HCT116 (cell line): ENCODE measurements at regions of chr5 and their contacts with region 1.

Region 1: GRCh38 chr5:138178516-138179276 is at the starts of genes BRD8 and KIF20A:
- DNase-seq: peak; percentile 94
- ATAC-seq: peak; percentile 86
- H3K4me3 ChIP-seq: peak within 1 kb of the TSS; percentile 88 to 99
- H3K27ac ChIP-seq: peak within 1 kb of the TSS; percentile 82
- H3K4me1 ChIP-seq: peaks cover 0 to 10% of the 10 kb centered on the region in 2 experiments; a peak in 1 of 4 replicates
- H3K27me3 ChIP-seq: no peaks in the 10 kb centered on the region
- CTCF ChIP-seq: no peak
- POLR2A ChIP-seq: peak; percentile 92
- RAD21 ChIP-seq: no peak
- total RNA-seq, gene BRD8: 80.8 TPM
- total RNA-seq, gene KIF20A: 74.2 TPM

Region 2: GRCh38 chr5:138282920-138283742 is 104.4 kb after region 1 on chr5:
- CTCF ChIA-PET with region 1: interaction called, 6 read pairs
- POLR2A ChIA-PET with region 1: no interaction called
- RAD21 ChIA-PET with region 1: interaction called, 3 read pairs
- intact Hi-C with region 1: loop called (anchors 1 kb)
- DNase-seq: peak; percentile 34
- ATAC-seq: peak; percentile 95
- H3K4me3 ChIP-seq: no peak overlapping the region
- H3K27ac ChIP-seq: no peak overlapping the region
- H3K4me1 ChIP-seq: peaks cover 0 to 3% of the 10 kb centered on the region in 2 experiments; a peak in 1 of 4 replicates
- H3K27me3 ChIP-seq: no peaks in the 10 kb centered on the region
- CTCF ChIP-seq: peak; percentile 53 to 69 (median 55)
- POLR2A ChIP-seq: no peak
- RAD21 ChIP-seq: peak; percentile 71

Region 3: DNA sequence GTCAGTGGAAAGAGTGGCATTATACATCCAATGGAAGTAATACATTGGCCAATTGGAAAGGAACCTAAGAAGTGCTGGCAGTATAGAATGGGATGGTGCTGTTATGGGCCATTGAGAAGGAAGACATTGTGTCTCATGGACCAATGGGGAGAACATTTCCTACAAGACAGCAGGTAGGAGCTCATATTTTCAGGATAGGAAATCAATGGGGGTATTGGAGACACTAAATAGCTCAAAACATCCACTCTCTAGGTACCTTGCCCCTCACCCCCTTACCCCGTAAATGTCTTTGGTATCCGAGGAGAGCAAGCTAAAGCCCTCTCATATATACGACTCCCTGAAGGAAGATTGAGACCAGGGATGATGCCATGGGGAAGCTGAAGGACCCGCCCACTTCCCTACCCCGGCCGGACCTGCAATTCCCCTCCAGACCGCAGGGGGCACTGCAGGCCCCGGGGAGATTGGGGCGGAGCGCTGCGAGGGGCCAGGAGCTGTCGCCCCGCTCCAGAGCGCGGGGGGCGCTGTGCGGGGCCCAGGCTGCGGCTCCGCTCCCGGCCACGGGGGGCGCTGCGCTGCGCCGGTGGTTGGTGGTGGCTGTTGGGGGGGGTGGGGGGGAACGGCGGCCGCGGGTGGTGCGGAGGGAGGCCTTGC is 173.5 kb after region 1 on chr5 and contains the start of gene KDM3B:
- CTCF ChIA-PET with region 1: interaction called, 3 read pairs
- POLR2A ChIA-PET with region 1: no interaction called
- RAD21 ChIA-PET with region 1: no interaction called
- intact Hi-C with region 1: loop called (anchors 5 kb)
- DNase-seq: peak; percentile 76
- ATAC-seq: peak; percentile 84
- H3K4me3 ChIP-seq: peak within 1 kb of the TSS; percentile 83 to 98
- H3K27ac ChIP-seq: peak within 1 kb of the TSS; percentile 90
- H3K4me1 ChIP-seq: peaks cover 0 to 13% of the 10 kb centered on the region in 2 experiments; a peak in 2 of 4 replicates
- H3K27me3 ChIP-seq: no peaks in the 10 kb centered on the region
- CTCF ChIP-seq: peak; percentile 99 to 100 (median 99)
- POLR2A ChIP-seq: no peak
- RAD21 ChIP-seq: 0 out of 2 replicates have a peak, but pooled peaks have one; percentile 31
- total RNA-seq, gene KDM3B: 65.1 TPM

Region 4: DNA sequence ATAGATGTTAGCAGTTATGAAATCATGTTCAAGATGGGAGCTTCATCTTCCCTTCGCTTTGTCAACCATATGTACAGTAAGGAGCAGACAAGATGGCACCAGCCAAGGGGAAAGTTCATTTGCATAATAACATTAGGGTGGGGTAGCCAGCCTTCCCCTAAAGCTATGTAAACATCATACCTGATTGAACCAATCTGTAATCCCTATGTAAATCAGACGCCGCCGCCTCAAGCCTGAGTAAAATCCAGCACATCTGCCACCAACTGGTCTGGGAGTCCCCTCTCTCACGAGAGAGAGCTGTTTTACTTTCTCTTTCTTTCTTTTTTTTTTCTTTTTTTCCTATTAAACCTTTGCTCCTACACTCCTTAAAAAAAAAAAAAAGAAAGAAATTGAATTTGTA is 229.3 kb after region 1 on chr5:
- CTCF ChIA-PET with region 1: interaction called, 5 read pairs
- POLR2A ChIA-PET with region 1: no interaction called
- RAD21 ChIA-PET with region 1: no interaction called
- intact Hi-C with region 1: loop called (anchors 2 kb)
- DNase-seq: no peak
- ATAC-seq: no peak
- H3K4me3 ChIP-seq: no peak overlapping the region
- H3K27ac ChIP-seq: no peak overlapping the region
- H3K4me1 ChIP-seq: no peaks in the 10 kb centered on the region
- H3K27me3 ChIP-seq: no peaks in the 10 kb centered on the region
- CTCF ChIP-seq: no peak
- POLR2A ChIP-seq: no peak
- RAD21 ChIP-seq: no peak

Region 5: DNA sequence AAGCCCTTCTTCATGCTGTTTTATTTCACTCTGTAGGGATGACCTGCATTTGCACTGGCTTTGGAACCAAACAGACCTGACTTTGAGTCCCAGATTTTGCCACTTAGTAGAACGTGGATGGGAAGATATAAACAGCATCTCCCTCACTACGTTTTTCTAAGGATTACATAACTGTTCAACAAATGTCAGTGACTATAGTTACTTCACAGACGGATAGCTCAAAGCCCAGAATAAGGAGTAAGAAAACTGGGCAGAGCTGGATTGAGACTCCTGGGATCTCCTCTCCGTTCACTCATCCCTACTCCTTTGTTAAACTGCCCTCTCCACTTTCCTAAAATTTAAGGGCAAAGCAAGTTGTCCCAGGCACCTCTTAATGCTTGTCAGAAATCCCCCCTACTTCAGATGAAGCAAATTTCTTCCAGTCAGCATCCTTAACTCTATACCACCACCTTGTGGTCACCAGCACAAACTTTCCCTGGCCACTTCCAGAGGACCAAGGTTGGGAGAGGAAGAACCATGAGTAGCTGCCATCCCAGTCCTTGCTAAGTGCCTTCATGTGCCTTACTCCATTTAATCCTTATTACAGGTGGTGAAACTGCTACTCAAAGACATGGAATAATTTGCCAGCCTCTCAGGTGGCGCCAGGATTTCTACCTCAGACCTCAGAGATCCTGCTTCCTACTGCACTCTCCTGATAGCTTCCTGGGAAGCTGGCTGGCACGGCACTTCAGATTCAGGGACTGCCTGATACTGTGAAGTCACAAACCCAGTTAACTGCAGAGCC is 325.0 kb after region 1 on chr5:
- CTCF ChIA-PET with region 1: interaction called, 9 read pairs
- POLR2A ChIA-PET with region 1: no interaction called
- RAD21 ChIA-PET with region 1: no interaction called
- intact Hi-C with region 1: loop called (anchors 5 kb)
- DNase-seq: peak; percentile 34
- ATAC-seq: peak; percentile 82
- H3K4me3 ChIP-seq: no peak overlapping the region
- H3K27ac ChIP-seq: no peak overlapping the region
- H3K4me1 ChIP-seq: no peaks in the 10 kb centered on the region
- H3K27me3 ChIP-seq: no peaks in the 10 kb centered on the region
- CTCF ChIP-seq: peak; percentile 72 to 78 (median 76)
- POLR2A ChIP-seq: no peak
- RAD21 ChIP-seq: peak; percentile 89

Region 6: GRCh38 chr5:138542956-138543729 is 364.4 kb after region 1 on chr5 and contains the start of gene ETF1:
- CTCF ChIA-PET with region 1: no interaction called
- POLR2A ChIA-PET with region 1: no interaction called
- RAD21 ChIA-PET with region 1: no interaction called
- intact Hi-C with region 1: loop called (anchors 10 kb)
- DNase-seq: peak; percentile 97
- ATAC-seq: peak; percentile 88
- H3K4me3 ChIP-seq: peak within 1 kb of the TSS; percentile 84 to 97
- H3K27ac ChIP-seq: peak within 1 kb of the TSS; percentile 78
- H3K4me1 ChIP-seq: peaks cover 19 to 50% of the 10 kb centered on the region in 2 experiments; a peak in 3 of 4 replicates
- H3K27me3 ChIP-seq: no peaks in the 10 kb centered on the region
- CTCF ChIP-seq: no peak
- POLR2A ChIP-seq: peak; percentile 18
- RAD21 ChIP-seq: no peak
- total RNA-seq, gene ETF1: 178 TPM